A673 (cell line): ENCODE measurements at regions of chr11 and their contacts with region 1.

Region 1: DNA sequence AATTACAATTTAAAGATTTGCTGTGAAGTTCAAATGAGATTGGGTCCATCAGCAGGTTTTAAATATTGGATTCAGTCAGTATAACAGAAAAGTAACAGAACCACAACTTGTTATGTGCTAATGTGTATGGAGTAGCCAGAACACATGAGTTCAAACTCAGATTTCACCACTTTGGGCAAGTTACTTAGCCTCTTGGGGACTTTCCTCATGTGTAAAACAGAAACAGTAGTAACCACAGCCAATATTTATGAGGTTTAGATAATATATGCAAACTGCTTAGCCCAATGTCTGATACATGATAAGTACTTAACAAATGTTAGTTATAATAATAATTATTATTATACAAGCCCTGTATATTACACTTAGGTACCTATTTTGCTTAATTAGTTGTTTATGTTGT is 21.8 kb upstream of the SLC5A12 start:
- DNase-seq: no peak
- H3K4me3 ChIP-seq: no peak overlapping the region
- H3K27ac ChIP-seq: no peak overlapping the region
- H3K4me1 ChIP-seq: no peaks in the 10 kb centered on the region
- H3K27me3 ChIP-seq: peaks cover 47% of the 10 kb centered on the region
- CTCF ChIP-seq: no peak

Region 2: GRCh38 chr11:26860091-26860780 is 116.6 kb after region 1 on chr11:
- CTCF ChIA-PET with region 1: no interaction called
- POLR2A ChIA-PET with region 1: interaction called, 13 read pairs
- intact Hi-C with region 1: no loop called
- DNase-seq: no peak
- H3K4me3 ChIP-seq: no peak overlapping the region
- H3K27ac ChIP-seq: no peak overlapping the region
- H3K4me1 ChIP-seq: no peaks in the 10 kb centered on the region
- H3K27me3 ChIP-seq: peaks cover 52% of the 10 kb centered on the region
- CTCF ChIP-seq: no peak

Region 3: DNA sequence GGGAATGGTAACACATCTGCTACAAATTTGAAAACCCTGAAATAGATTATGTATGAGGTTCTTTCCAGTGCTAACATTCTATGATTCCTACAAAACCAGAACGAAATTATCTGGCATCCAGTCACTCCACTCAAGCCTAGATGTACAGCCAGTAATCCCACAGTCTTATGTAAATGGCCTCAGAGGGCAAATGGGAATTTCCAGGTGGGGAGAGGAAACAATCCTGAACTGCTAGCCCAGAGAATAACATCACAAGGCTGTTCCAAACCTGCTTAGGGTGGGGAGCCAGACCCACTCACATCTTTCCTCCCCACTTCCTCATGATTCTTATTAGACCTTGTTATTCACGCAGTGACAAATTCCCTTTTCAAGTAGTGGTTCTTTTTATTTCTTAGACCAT is 253.8 kb after region 1 on chr11:
- CTCF ChIA-PET with region 1: no interaction called
- POLR2A ChIA-PET with region 1: no interaction called
- intact Hi-C with region 1: no loop called
- DNase-seq: no peak
- H3K4me3 ChIP-seq: no peak overlapping the region
- H3K27ac ChIP-seq: no peak overlapping the region
- H3K4me1 ChIP-seq: no peaks in the 10 kb centered on the region
- H3K27me3 ChIP-seq: peaks cover 92% of the 10 kb centered on the region
- CTCF ChIP-seq: no peak